Dorsolateral prefrontal cortex (tissue), 120 donors: ENCODE measurements at regions of chr5 and their contacts with region 1.

Region 1: GRCh38 chr5:5492087-5492933 is 69.8 kb downstream of the ICE1 start:
- DNase-seq: peak in 2 of 10 donors; percentile 15 to 46
- H3K4me3 ChIP-seq: peak overlapping the region in 1 of 59 donors; percentile 7
- H3K27ac ChIP-seq: no peak overlapping the region
- H3K27me3 ChIP-seq: no peaks in the 10 kb centered on the region
- CTCF ChIP-seq: peak; percentile 28 to 79 (median 63)

Region 2: GRCh38 chr5:6452622-6453504 is 960.6 kb after region 1 on chr5:
- intact Hi-C with region 1: loop called in 1 of 2 experiments (anchors 5 kb)
- DNase-seq: peak in 2 of 10 donors; percentile 43 to 80
- H3K4me3 ChIP-seq: peak overlapping the region in 52 of 59 donors; percentile 9 to 77 (median 66)
- H3K27ac ChIP-seq: peak overlapping the region in 1 of 59 donors; percentile 37
- H3K27me3 ChIP-seq: peaks cover 0 to 91% (median 23%) of the 10 kb centered on the region in 45 donors
- CTCF ChIP-seq: no peak

Region 3: DNA sequence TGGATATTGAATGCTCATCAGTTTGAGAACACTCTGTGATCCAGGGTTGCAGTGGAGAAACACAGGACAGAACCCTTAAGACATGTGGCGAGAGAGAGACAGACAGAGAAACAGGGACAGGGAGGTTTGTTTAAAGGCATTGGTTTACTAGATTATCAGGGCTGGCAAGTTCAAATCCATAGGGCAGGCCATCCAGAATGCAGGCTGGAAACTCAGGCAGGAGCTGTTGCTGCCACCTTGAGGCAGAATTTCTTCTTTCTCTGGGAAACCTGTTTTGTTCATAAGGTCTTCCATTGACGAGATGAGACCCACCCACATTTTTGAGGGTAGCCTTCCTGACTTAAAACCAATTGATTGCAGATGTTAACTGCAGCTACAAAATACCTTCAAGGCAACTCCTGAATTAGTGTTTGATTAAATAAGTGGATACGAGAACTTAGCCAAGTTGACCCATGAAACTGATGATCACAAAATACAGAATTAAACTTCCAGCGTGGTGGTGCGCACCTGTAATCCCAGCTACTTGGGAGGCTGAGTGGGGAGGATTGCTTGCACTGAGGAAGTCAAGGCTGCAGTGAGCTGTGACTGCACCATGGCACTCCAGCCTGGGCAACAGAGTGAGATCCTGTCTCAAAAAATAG is 1084.7 kb after region 1 on chr5:
- intact Hi-C with region 1: loop called (anchors 5 kb)
- DNase-seq: peak in 2 of 10 donors; percentile 29 to 66
- H3K4me3 ChIP-seq: no peak overlapping the region
- H3K27ac ChIP-seq: no peak overlapping the region
- H3K27me3 ChIP-seq: peaks cover 0 to 59% (median 0%) of the 10 kb centered on the region in 45 donors
- CTCF ChIP-seq: peak; percentile 18 to 69 (median 55)

Region 4: DNA sequence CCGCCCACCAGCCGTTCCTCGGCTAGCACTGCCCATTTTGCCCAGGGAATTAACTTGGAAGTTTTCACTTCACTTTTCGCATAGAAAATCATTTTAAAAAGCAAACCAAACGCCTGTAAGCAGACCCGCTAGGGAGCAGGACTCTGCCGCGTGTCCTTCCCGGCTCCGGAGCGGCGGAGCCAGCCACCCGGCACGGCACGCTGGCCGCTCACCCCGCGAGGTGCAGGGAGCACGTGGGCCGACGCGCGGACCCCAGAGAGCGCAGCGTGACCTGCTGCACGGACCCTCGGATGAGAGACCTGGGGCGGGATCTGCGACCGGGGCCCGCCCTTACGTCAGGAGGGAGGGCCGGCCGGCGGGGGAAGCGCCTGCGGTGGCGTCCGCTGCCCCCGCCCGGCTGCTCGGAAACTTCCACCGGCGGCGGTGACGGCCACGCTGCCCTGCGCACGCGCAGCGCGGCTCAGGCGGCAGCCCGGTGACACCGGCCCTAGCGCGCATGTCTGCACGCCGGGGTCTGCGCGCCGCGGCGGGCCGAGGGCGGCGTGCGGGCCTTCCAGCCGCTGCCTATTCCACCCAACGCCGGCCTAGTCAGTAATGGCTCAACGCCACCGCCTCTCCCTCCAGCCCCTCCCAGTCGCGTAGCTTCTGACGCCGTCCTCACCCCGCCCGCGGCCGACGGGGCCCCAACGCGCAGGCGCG is 1220.4 kb after region 1 on chr5:
- intact Hi-C with region 1: loop called in 1 of 2 experiments (anchors 10 kb)
- DNase-seq: peak; percentile 89 to 97 (median 94)
- H3K4me3 ChIP-seq: peak overlapping the region; percentile 55 to 98 (median 88)
- H3K27ac ChIP-seq: peak overlapping the region; percentile 57 to 99 (median 97)
- H3K27me3 ChIP-seq: no peaks in the 10 kb centered on the region
- CTCF ChIP-seq: peak in 20 of 56 donors; percentile 0 to 60 (median 22)

Region 5: GRCh38 chr5:6744841-6745705 is 1252.8 kb after region 1 on chr5:
- intact Hi-C with region 1: loop called in 1 of 2 experiments (anchors 5 kb)
- DNase-seq: peak in 1 of 10 donors; percentile 35
- H3K4me3 ChIP-seq: no peak overlapping the region
- H3K27ac ChIP-seq: peak overlapping the region in 7 of 59 donors; percentile 7 to 27 (median 17)
- H3K27me3 ChIP-seq: no peaks in the 10 kb centered on the region
- CTCF ChIP-seq: no peak